Transverse colon (tissue), 4 donors: ENCODE measurements at regions of chr7 and their contacts with region 1.

Region 1: DNA sequence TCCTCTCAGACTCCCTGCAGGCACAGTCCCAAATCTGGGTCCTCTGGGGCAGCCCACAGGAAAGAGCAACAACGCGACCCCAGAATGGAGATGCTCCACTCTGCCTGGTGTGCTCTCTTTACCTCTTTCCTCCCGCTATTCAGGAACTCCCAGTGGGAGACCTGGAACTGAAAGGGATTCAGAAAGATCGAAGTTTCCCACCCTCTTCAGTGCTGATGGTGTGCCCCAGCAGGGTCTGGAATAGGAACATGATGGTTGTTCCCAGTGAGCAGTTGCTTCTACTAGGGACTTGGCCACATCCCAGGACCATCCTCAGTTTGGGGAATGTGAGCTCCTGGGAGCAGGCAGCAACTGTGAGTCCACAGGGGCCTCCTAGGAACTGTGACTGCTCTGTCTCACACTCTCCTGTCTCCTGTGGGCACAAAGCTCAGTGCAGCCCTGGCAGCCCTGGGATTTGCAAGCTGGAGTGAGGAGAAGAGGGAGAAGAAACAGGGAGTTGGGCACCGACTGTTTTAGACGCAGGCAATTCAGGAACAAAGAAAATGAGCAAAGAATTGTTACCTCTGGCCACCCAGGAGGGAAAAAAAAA is 17.9 kb downstream of the OR6V1 start:
- DNase-seq: no peak
- H3K4me3 ChIP-seq: no peak overlapping the region
- H3K27ac ChIP-seq: no peak overlapping the region
- H3K4me1 ChIP-seq: no peaks in the 10 kb centered on the region
- H3K27me3 ChIP-seq: no peaks in the 10 kb centered on the region
- CTCF ChIP-seq: no peak
- EP300 ChIP-seq: no peak
- POLR2A ChIP-seq: no peak

Region 2: GRCh38 chr7:142263598-142264380 is 806.2 kb before region 1 on chr7:
- in situ Hi-C with region 1: no loop called
- intact Hi-C with region 1: loop called (anchors 5 kb)
- DNase-seq: no peak
- H3K4me3 ChIP-seq: no peak overlapping the region
- H3K27ac ChIP-seq: no peak overlapping the region
- H3K4me1 ChIP-seq: no peaks in the 10 kb centered on the region
- H3K27me3 ChIP-seq: no peaks in the 10 kb centered on the region
- CTCF ChIP-seq: no peak
- EP300 ChIP-seq: no peak
- POLR2A ChIP-seq: no peak